ENCODE measurements at regions of chr3 and their contacts with region 1.

Region 1: GRCh38 chr3:197949754-197950660 is at the start of gene RPL35A:
- DNase-seq: peak; percentile 66 to 96 (median 92)
- ATAC-seq: peak; percentile 94
- H3K4me3 ChIP-seq: peak within 1 kb of the TSS; percentile 97
- H3K4me3 Mint-ChIP-seq: peak within 1 kb of the TSS; percentile 91 to 99 (median 96)
- H3K27ac ChIP-seq: peak within 1 kb of the TSS; percentile 93
- H3K27ac Mint-ChIP-seq: peak within 1 kb of the TSS; percentile 95 to 100 (median 100)
- H3K4me1 ChIP-seq: peaks cover 14 to 26% of the 10 kb centered on the region in 2 donors
- H3K4me1 Mint-ChIP-seq: peaks cover 27 to 52% (median 41%) of the 10 kb centered on the region in 7 donors
- H3K27me3 ChIP-seq: no peaks in the 10 kb centered on the region
- H3K27me3 Mint-ChIP-seq: peaks cover 0 to 2% (median 0%) of the 10 kb centered on the region in 5 donors
- total RNA-seq, gene RPL35A: 1,070 to 2,246 (median 1,860) TPM

Region 2: DNA sequence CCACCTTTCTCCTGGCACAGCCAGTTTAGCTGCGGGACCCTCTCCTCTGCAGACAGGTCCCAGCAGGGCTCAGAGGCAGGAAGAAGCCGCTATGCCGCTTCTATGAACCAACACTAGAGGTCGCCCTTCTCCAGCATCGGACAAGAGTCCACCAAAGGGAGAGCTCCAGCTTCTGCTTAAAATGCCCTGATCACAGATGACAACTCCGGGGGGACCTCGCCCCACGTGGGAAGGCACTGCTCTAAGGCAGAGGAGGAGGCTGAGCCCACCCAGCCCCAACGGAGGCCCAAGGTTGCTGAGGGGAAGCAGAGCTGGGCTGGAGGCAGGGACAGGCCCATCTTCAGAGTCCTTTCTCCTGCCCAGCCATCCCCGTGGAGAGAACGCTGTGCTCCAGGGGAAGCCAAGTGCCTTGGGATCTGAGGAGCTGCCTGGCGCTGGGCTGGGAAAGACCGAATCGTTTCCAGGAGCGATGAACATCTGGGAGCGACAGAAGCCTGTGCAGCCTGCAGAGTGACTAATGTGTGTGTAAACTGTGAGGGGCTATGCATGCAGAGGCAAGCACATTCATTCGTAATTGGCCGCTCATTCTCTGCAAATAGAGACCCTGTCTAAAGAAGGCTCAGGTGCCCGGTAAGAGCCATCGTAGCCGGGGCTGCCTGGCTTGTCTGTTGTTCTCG is 350.8 kb before region 1 on chr3:
- CTCF ChIA-PET with region 1: no interaction called
- POLR2A ChIA-PET with region 1: no interaction called
- intact Hi-C with region 1: loop called in 1 of 2 experiments (anchors 10 kb)
- DNase-seq: peak; percentile 47 to 84 (median 79)
- ATAC-seq: peak; percentile 97
- H3K4me3 ChIP-seq: no peak overlapping the region
- H3K4me3 Mint-ChIP-seq: peak overlapping the region in 2 of 10 donors; percentile 6 to 28
- H3K27ac ChIP-seq: no peak overlapping the region
- H3K27ac Mint-ChIP-seq: peak overlapping the region in 8 of 9 donors; percentile 23 to 79 (median 58)
- H3K4me1 ChIP-seq: peaks cover 0 to 9% of the 10 kb centered on the region in 2 donors
- H3K4me1 Mint-ChIP-seq: peaks cover 6 to 24% (median 10%) of the 10 kb centered on the region in 7 donors
- H3K27me3 ChIP-seq: no peaks in the 10 kb centered on the region
- H3K27me3 Mint-ChIP-seq: peaks cover 0 to 4% (median 0%) of the 10 kb centered on the region in 5 donors

Region 3: GRCh38 chr3:197736491-197737318 is 213.3 kb before region 1 on chr3 and contains the start of gene RUBCN:
- CTCF ChIA-PET with region 1: no interaction called
- POLR2A ChIA-PET with region 1: no interaction called
- intact Hi-C with region 1: loop called (anchors 1 kb)
- DNase-seq: peak; percentile 81 to 95 (median 93)
- ATAC-seq: peak; percentile 98
- H3K4me3 ChIP-seq: peak within 1 kb of the TSS; percentile 67
- H3K4me3 Mint-ChIP-seq: peak within 1 kb of the TSS; percentile 82 to 99 (median 96)
- H3K27ac ChIP-seq: peak within 1 kb of the TSS; percentile 83
- H3K27ac Mint-ChIP-seq: peak within 1 kb of the TSS; percentile 89 to 99 (median 97)
- H3K4me1 ChIP-seq: peaks cover 9 to 10% of the 10 kb centered on the region in 2 donors
- H3K4me1 Mint-ChIP-seq: peaks cover 29 to 52% (median 32%) of the 10 kb centered on the region in 7 donors
- H3K27me3 ChIP-seq: no peaks in the 10 kb centered on the region
- H3K27me3 Mint-ChIP-seq: no peaks in the 10 kb centered on the region
- total RNA-seq, gene RUBCN: 43.3 to 61.7 (median 52.9) TPM

Region 4: DNA sequence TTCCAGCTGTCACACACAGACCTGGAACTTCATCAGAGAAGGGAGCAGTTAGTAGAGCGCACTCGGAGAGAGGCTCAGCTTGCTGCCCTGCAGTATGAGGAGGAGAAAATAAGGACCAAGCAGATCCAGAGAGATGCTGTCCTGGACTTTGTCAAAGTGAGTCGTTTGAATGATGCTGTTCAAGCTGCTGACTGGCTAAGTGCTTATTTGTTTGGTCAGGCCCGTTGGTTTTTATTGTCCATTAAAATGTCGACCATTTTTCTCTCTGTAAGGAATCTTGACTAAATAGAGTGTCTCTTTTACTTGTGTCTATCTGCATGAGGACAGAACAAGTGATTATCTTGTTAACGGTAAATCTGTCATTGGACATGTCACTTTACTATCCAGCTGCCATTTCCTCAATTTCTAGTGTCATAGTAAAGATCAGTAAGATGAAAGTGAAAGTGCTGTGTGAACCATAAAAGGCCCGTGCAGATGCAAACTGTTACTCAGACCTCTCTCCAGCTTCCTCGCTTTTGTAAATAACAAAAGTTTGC is 102.1 kb before region 1 on chr3:
- CTCF ChIA-PET with region 1: no interaction called
- POLR2A ChIA-PET with region 1: interaction called, 3 read pairs
- intact Hi-C with region 1: loop called in 1 of 2 experiments (anchors 5 kb)
- DNase-seq: peak in 7 of 9 donors; percentile 33 to 65 (median 53)
- ATAC-seq: peak; percentile 92
- H3K4me3 ChIP-seq: peak overlapping the region; percentile 49
- H3K4me3 Mint-ChIP-seq: peak overlapping the region; percentile 58 to 93 (median 86)
- H3K27ac ChIP-seq: peak overlapping the region; percentile 67
- H3K27ac Mint-ChIP-seq: peak overlapping the region; percentile 88 to 98 (median 93)
- H3K4me1 ChIP-seq: peaks cover 3 to 8% of the 10 kb centered on the region in 2 donors
- H3K4me1 Mint-ChIP-seq: peaks cover 18 to 30% (median 26%) of the 10 kb centered on the region in 7 donors
- H3K27me3 ChIP-seq: no peaks in the 10 kb centered on the region
- H3K27me3 Mint-ChIP-seq: no peaks in the 10 kb centered on the region

Region 5: DNA sequence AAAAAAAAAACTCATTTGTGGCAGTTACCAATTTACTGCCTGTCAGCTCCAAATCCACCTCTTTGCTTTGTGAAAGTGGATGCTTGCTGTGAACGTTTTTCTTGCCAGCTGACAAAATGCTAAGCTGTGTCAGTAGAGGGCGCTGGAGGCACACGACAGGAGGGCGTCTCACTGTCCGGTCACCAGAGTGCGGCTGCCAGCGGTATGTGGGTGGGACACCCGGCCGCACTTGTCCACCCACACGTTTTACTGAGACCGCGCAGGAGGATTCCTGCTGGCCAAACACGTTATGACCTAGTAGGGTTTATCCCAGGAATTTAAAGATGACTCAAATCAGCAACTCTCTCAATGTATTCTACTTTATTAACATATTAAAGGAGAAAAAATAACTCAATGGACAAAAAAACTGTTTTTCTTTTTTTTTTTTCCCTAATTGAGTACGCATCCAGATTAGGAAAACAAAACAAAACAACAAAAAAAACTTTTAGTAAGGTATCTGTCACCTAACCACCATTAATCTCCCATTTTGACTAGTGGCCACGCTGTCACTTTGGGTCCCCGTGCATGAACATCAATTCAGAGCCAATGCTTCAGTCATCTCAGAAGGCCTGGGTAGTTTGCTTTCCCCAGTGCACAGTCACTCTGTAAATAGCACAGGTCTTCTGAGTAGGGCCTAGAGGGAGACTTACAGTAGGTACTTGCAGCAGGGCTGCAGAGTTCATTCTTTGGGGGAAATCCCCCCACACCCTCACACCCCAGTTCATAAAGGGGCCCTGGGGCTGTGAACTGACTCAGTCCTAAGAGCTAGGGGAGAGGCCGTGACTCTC is 43.8 kb before region 1 on chr3:
- CTCF ChIA-PET with region 1: no interaction called
- POLR2A ChIA-PET with region 1: no interaction called
- intact Hi-C with region 1: loop called in 1 of 2 experiments (anchors 1 kb)
- DNase-seq: peak; percentile 38 to 79 (median 62)
- ATAC-seq: peak; percentile 91
- H3K4me3 ChIP-seq: no peak overlapping the region
- H3K4me3 Mint-ChIP-seq: peak overlapping the region in 2 of 10 donors; percentile 4 to 58
- H3K27ac ChIP-seq: no peak overlapping the region
- H3K27ac Mint-ChIP-seq: peak overlapping the region in 1 of 9 donors; percentile 15
- H3K4me1 ChIP-seq: peaks cover 0 to 6% of the 10 kb centered on the region in 2 donors
- H3K4me1 Mint-ChIP-seq: peaks cover 0 to 10% (median 3%) of the 10 kb centered on the region in 7 donors
- H3K27me3 ChIP-seq: no peaks in the 10 kb centered on the region
- H3K27me3 Mint-ChIP-seq: peaks cover 0 to 4% (median 0%) of the 10 kb centered on the region in 5 donors

Region 6: DNA sequence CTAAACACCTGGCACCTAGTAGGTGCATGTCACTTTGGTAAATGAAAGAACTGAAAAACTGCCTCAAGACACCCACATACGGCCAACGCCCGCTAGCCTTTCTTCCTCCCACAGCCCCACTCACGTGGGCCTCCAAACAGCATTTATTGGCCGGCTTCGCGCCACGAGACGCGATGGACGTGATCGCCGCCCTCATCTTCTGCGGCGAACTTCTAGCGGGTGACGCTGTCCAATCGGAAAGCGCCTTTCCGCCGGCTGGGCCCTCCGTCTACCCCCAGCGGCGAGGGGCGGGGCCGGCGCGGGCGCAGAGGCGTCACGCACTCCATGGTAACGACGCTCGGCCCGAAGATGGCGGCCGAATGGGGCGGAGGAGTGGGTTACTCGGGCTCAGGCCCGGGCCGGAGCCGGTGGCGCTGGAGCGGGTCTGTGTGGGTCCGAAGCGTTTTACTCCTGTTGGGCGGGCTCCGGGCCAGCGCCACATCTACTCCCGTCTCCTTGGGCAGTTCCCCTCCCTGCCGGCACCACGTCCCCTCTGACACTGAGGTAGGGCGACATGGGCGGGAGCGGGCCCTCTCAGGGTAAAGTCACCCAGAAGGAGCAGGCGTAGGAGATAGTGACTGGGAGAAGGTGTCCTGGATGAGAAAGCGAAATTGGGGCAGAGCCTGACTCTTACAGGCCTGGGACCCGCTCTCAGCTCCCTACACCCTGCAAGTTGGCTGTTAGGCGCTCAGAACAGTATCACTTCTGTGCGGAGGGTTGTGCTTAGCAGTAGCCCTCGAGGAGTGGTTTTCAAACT is 10.1 kb after region 1 on chr3 and contains the start of gene LMLN:
- CTCF ChIA-PET with region 1: interaction called, 4 read pairs
- POLR2A ChIA-PET with region 1: interaction called, 26 read pairs
- intact Hi-C with region 1: loop called (anchors 1 kb)
- DNase-seq: peak; percentile 93 to 96 (median 95)
- ATAC-seq: peak; percentile 98
- H3K4me3 ChIP-seq: peak within 1 kb of the TSS; percentile 91
- H3K4me3 Mint-ChIP-seq: peak within 1 kb of the TSS; percentile 86 to 98 (median 92)
- H3K27ac ChIP-seq: peak within 1 kb of the TSS; percentile 86
- H3K27ac Mint-ChIP-seq: peak within 1 kb of the TSS; percentile 92 to 97 (median 96)
- H3K4me1 ChIP-seq: peaks cover 26 to 27% of the 10 kb centered on the region in 2 donors
- H3K4me1 Mint-ChIP-seq: peaks cover 33 to 74% (median 48%) of the 10 kb centered on the region in 7 donors
- H3K27me3 ChIP-seq: no peaks in the 10 kb centered on the region
- H3K27me3 Mint-ChIP-seq: peaks cover 0 to 2% (median 0%) of the 10 kb centered on the region in 5 donors
- total RNA-seq, gene LMLN: 4.2 to 10.9 (median 6.8) TPM

Measured in naive thymus-derived CD4-positive, alpha-beta T cell (primary cell).